SK-N-SH (cell line): ENCODE measurements at regions of chr6 and their contacts with region 1.

Region 1: GRCh38 chr6:3273707-3274521 is 15.2 kb downstream of the PSMG4 start:
- DNase-seq: no peak
- H3K4me3 ChIP-seq: no peak overlapping the region
- H3K27ac ChIP-seq: no peak overlapping the region
- H3K4me1 ChIP-seq: peaks cover 0 to 14% of the 10 kb centered on the region in 2 experiments; a peak in 1 of 4 replicates
- H3K27me3 ChIP-seq: no peaks in the 10 kb centered on the region
- CTCF ChIP-seq: no peak
- EP300 ChIP-seq: no peak
- RAD21 ChIP-seq: no peak

Region 2: GRCh38 chr6:2344319-2344905 is 929.5 kb before region 1 on chr6:
- CTCF ChIA-PET with region 1: no interaction called
- POLR2A ChIA-PET with region 1: no interaction called
- DNase-seq: no peak
- H3K4me3 ChIP-seq: no peak overlapping the region
- H3K27ac ChIP-seq: no peak overlapping the region
- H3K4me1 ChIP-seq: no peaks in the 10 kb centered on the region
- H3K27me3 ChIP-seq: no peaks in the 10 kb centered on the region
- CTCF ChIP-seq: no peak
- EP300 ChIP-seq: no peak
- RAD21 ChIP-seq: no peak

Region 3: GRCh38 chr6:3214898-3215297 is 59.0 kb before region 1 on chr6:
- CTCF ChIA-PET with region 1: no interaction called
- POLR2A ChIA-PET with region 1: no interaction called
- DNase-seq: no peak
- H3K4me3 ChIP-seq: no peak overlapping the region
- H3K27ac ChIP-seq: peak overlapping the region in 1 of 2 experiments; percentile 35; a peak in 1 of 4 replicates
- H3K4me1 ChIP-seq: peaks cover 3 to 5% of the 10 kb centered on the region in 2 experiments; a peak in 3 of 4 replicates
- H3K27me3 ChIP-seq: no peaks in the 10 kb centered on the region
- CTCF ChIP-seq: no peak
- EP300 ChIP-seq: no peak
- RAD21 ChIP-seq: no peak

Region 4: DNA sequence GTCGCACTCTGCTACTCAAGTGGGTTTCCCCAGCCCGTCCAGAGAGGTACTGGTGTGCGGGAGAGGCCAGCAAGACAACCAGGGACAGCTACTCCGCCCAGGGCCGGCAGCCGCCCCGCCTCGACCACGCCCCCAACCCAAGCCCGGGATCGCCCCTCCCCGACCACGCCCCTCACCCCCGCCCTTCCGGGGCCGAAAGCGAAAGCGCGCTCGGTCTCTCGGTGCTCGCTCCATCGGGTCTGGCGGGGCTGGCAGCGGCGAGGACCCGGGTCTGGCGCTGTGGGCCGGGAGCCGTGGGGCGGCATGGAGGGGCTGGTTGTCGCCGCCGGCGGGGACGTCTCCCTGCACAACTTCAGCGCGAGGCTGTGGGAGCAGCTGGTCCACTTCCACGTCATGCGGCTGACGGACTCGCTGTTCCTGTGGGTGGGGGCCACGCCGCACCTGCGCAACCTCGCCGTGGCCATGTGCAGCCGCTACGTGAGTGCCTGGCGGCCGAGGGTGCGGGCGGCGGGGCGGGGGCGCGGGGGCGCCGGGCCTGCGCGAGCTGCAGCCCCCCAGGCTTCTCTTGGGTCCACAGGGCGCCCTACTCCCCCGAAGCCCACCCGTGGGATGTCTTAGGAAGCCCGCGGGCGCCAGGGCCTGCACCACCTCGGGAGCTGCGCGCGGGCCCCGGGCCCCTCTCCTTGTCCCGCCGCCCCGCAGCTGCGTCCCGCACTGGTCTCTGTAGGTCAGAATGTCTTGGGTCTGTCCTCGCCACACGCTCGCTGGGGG is 15.0 kb before region 1 on chr6 and contains the start of gene PSMG4:
- CTCF ChIA-PET with region 1: interaction called, 13 read pairs
- POLR2A ChIA-PET with region 1: interaction called, 4 read pairs
- DNase-seq: peak; percentile 100
- H3K4me3 ChIP-seq: peak within 1 kb of the TSS; percentile 75 to 88
- H3K27ac ChIP-seq: peak within 1 kb of the TSS; percentile 40 to 84; a peak in 3 of 4 replicates
- H3K4me1 ChIP-seq: peaks cover 6 to 23% of the 10 kb centered on the region in 2 experiments; a peak in 1 of 4 replicates
- H3K27me3 ChIP-seq: no peaks in the 10 kb centered on the region; the same call in 1 of the 2 replicates
- CTCF ChIP-seq: no peak
- EP300 ChIP-seq: 0 out of 4 replicates have a peak, but pooled peaks of 1 of the 2 experiments have one; percentile 16
- RAD21 ChIP-seq: no peak
- polyA plus RNA-seq, gene PSMG4: 60.0 and 61.3 TPM in 2 replicates

Region 5: GRCh38 chr6:3294921-3295871 is 21.3 kb after region 1 on chr6:
- CTCF ChIA-PET with region 1: no interaction called
- POLR2A ChIA-PET with region 1: no interaction called
- DNase-seq: peak; percentile 52
- H3K4me3 ChIP-seq: no peak overlapping the region
- H3K27ac ChIP-seq: no peak overlapping the region
- H3K4me1 ChIP-seq: peaks cover 0 to 11% of the 10 kb centered on the region in 2 experiments; a peak in 1 of 4 replicates
- H3K27me3 ChIP-seq: peaks cover 10% of the 10 kb centered on the region; the same call in 1 of the 2 replicates
- CTCF ChIP-seq: no peak; the same call in 1 of the 2 replicates
- EP300 ChIP-seq: no peak
- RAD21 ChIP-seq: peak; percentile 22; the same call in 1 of the 2 replicates

Region 6: GRCh38 chr6:3390698-3391097 is 116.8 kb after region 1 on chr6:
- CTCF ChIA-PET with region 1: no interaction called
- POLR2A ChIA-PET with region 1: no interaction called
- DNase-seq: no peak
- H3K4me3 ChIP-seq: no peak overlapping the region
- H3K27ac ChIP-seq: no peak overlapping the region
- H3K4me1 ChIP-seq: no peaks in the 10 kb centered on the region; a peak in 1 of 4 replicates
- H3K27me3 ChIP-seq: peaks cover 38% of the 10 kb centered on the region
- CTCF ChIP-seq: no peak
- EP300 ChIP-seq: no peak
- RAD21 ChIP-seq: no peak